A549 (cell line): ENCODE measurements at regions of chr6 and their contacts with region 1.

Region 1: DNA sequence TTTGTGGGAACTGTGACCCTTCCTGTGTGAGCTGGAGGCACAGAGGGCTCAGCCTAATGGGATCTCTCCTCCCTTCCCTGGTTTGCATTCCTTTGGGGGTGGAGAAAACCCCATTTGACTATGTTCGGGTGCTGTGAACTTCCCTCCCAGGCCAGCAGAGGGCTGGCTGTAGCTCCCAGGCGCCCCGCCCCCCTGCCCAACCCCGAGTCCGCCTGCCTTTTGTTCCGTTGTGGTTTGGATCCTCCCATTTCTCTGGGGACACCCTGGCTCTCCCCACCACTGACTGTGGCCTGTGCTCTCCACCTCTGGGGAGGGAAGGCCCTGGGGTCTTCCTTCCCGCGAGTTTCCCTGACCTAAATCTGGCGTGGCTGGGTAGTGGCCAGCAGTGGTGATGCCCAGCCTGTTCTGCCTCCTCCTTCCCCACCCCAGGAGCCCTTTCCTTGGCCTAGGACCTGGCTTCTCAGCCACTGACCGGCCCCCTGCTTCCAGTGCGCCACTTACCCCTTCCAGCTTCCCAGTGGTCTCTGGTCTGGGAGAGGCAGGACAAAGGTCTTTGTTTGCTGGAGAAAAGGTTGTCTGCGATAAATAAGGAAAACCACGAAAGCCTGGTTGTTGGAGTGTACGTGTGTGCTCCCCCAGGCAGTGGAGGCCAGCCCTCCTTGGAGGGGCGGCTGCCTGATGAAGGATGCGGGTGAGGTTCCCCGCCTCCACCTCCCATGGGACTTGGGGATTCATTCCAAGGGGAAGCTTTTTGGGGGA is 4.9 kb downstream of the VEGFA start:
- DNase-seq: peak; percentile 57 to 85
- ATAC-seq: peak in 1 of 2 experiments; percentile 45; a peak in 4 of 6 replicates
- H3K4me3 ChIP-seq: peak overlapping the region; percentile 59; the same call in 2 of the 3 replicates
- H3K27ac ChIP-seq: peak overlapping the region; percentile 97 to 100
- H3K4me1 ChIP-seq: peaks cover 30% of the 10 kb centered on the region
- CTCF ChIP-seq: peak; percentile 52
- EP300 ChIP-seq: no peak
- POLR2A ChIP-seq: no peak
- RAD21 ChIP-seq: peak; percentile 33 to 53; a peak in 4 of 5 replicates

Region 2: DNA sequence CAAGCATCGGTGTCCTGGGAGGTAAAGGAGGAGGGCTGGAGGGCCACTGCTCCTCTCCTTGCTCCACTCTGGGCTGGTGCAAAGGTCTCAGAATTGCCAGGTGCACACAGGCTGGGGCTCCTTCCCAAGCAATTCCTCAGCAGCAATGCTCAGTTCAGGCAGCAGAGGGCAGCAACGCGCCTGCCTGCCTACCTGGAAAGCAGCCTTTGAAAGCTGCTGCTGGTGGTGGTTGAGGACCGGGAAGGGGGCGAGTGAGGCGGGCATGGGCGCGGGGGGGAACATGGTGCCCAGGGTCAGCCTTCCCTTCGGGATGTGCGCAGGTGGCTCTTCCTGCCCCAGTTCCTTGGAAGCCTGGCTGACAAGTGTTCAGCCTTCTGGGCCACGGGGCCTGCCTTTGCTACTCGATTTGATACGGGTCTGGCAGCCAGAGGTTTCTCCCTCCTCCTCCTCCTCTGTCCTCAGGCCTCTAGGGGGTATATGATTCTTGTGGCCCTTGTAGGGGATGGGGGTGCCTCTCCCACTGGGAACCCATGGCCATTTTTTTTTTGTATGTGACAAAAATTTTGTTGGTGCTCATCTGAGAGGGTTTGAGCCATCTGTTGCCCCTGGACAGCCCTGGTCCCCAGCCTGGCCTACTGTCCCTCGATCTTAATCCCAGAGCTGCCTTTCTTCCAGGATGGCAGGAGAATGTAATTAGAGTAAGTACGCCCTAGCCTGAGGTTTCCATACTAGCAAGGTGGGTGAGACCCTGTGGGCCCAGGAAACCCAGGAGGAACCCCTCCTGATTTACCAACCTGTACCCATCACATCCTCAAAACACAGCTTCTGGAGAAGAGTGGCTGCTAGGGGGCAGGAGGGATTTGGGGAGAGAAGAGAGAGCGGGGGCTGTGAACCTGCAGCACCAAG is 107.5 kb before region 1 on chr6:
- CTCF ChIA-PET with region 1: interaction called, 72 read pairs
- POLR2A ChIA-PET with region 1: interaction called, 4 read pairs
- DNase-seq: peak; percentile 54 to 68
- ATAC-seq: peak; percentile 71 to 81
- H3K4me3 ChIP-seq: no peak overlapping the region
- H3K27ac ChIP-seq: peak overlapping the region; percentile 28 to 66; a peak in 2 of 6 replicates
- H3K4me1 ChIP-seq: peaks cover 14% of the 10 kb centered on the region; the same call in 2 of the 3 replicates
- CTCF ChIP-seq: peak; percentile 77
- EP300 ChIP-seq: no peak
- POLR2A ChIP-seq: no peak
- RAD21 ChIP-seq: peak; percentile 87 to 88

Region 3: DNA sequence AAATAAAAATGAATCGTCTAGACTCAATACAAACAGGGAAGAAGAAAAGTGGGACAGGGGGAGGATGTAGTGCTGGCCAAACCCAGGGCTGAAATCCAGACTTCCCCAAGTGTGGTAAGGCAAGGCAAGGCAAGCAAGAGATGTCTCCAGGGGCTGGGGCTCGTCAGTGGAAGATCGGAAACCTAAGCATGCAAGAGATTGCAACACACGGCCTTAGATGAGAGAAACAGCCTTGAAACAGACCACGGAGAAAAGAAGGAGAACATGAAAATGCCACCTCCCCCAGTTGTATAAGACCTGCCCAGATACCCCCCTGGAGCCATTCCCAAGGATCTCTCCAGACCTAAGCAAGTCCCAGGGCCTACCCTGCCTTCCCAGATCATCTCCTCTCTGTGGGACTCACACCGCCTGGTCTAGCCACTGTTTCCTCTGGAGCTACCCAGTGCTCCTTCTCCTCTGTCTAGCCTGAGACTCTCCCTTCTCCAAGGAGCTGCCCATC is 15.1 kb after region 1 on chr6:
- CTCF ChIA-PET with region 1: interaction called, 26 read pairs
- POLR2A ChIA-PET with region 1: no interaction called
- DNase-seq: no peak
- ATAC-seq: peak; percentile 20 to 45; a peak in 3 of 6 replicates
- H3K4me3 ChIP-seq: no peak overlapping the region
- H3K27ac ChIP-seq: peak overlapping the region in 1 of 2 experiments; percentile 33; a peak in 1 of 6 replicates
- H3K4me1 ChIP-seq: no peaks in the 10 kb centered on the region
- CTCF ChIP-seq: no peak
- EP300 ChIP-seq: no peak
- POLR2A ChIP-seq: no peak
- RAD21 ChIP-seq: no peak

Region 4: DNA sequence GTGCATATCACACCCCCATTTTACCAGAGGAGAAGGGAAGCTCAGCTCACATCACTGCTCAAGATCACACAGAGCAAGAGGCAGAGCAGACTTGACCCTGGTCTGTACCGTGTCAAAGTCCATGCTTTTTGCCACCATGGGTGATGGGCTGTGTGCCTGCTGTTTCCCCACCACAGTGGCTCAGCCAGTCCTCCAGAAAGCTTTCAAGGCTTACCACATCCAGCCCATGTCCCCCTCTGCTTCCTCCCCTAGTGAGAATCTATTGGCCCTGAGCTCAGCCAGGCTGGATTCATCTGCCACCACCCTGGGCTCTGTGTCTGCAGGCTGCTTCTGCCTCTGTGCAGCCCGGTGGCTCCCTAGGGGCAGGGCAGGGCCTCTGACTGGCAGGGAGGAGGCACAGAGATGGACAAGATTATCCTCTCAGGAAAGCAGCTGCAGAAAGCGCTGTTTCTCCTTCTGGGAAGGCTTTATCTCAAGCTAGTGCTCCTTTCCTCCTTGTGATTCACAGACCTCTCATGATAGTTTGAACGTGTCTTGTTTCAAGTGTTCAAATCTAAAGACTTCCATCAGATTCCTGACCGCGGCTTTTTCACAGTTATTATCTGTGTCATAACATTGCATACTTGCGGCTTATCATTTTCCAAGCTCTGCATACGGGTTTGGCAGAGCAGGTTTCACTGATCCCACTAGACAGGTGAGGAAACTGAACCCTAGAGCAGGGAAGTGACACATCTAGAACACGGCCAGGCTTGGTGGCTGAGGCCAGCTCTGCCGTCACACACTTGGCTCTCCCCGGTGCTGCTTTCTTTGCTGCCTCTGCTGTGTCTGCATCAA is 32.5 kb after region 1 on chr6:
- CTCF ChIA-PET with region 1: interaction called, 16 read pairs
- POLR2A ChIA-PET with region 1: no interaction called
- DNase-seq: no peak
- ATAC-seq: peak; percentile 9 to 57; a peak in 3 of 6 replicates
- H3K4me3 ChIP-seq: no peak overlapping the region
- H3K27ac ChIP-seq: peak overlapping the region; percentile 58 to 79; a peak in 4 of 6 replicates
- H3K4me1 ChIP-seq: peaks cover 66% of the 10 kb centered on the region
- CTCF ChIP-seq: no peak
- EP300 ChIP-seq: no peak
- POLR2A ChIP-seq: no peak
- RAD21 ChIP-seq: no peak

Region 5: DNA sequence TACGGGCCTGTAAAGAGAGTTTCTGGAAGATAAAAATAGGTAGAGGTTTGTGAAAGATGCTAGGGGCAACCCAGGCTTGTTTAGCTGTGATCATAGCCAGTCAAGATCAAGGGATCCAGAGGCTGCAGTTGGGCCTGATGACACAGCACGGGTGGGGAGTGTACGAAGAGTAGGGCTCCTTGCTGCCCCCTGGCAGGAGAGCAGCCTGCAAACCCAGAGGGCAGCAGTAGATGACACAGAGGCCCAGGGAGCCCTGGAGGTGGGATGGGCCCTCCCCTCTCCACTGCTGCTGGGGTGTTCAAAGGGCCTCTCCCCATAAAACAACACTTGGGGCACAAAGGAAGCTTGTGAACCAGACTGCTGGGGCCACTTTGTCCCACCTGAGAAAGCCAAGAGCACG is 42.2 kb after region 1 on chr6:
- CTCF ChIA-PET with region 1: interaction called, 24 read pairs
- POLR2A ChIA-PET with region 1: interaction called, 5 read pairs
- DNase-seq: peak; percentile 62 to 66
- ATAC-seq: peak; percentile 97 to 100
- H3K4me3 ChIP-seq: no peak overlapping the region
- H3K27ac ChIP-seq: peak overlapping the region; percentile 63 to 80
- H3K4me1 ChIP-seq: peaks cover 5% of the 10 kb centered on the region; the same call in 2 of the 3 replicates
- CTCF ChIP-seq: peak; percentile 38; the same call in 2 of the 3 replicates
- EP300 ChIP-seq: no peak
- POLR2A ChIP-seq: no peak
- RAD21 ChIP-seq: peak; percentile 32 to 38; a peak in 2 of 5 replicates

Region 6: GRCh38 chr6:44002593-44003344 is 227.8 kb after region 1 on chr6:
- CTCF ChIA-PET with region 1: interaction called, 19 read pairs
- POLR2A ChIA-PET with region 1: interaction called, 14 read pairs
- DNase-seq: peak; percentile 55 to 76
- ATAC-seq: peak; percentile 72
- H3K4me3 ChIP-seq: peak overlapping the region; percentile 60
- H3K27ac ChIP-seq: peak overlapping the region; percentile 100
- H3K4me1 ChIP-seq: peaks cover 68% of the 10 kb centered on the region
- CTCF ChIP-seq: no peak
- EP300 ChIP-seq: no peak
- POLR2A ChIP-seq: no peak; the same call in 1 of the 2 replicates
- RAD21 ChIP-seq: peak in 1 of 2 experiments; percentile 39; a peak in 3 of 5 replicates

Region 7: DNA sequence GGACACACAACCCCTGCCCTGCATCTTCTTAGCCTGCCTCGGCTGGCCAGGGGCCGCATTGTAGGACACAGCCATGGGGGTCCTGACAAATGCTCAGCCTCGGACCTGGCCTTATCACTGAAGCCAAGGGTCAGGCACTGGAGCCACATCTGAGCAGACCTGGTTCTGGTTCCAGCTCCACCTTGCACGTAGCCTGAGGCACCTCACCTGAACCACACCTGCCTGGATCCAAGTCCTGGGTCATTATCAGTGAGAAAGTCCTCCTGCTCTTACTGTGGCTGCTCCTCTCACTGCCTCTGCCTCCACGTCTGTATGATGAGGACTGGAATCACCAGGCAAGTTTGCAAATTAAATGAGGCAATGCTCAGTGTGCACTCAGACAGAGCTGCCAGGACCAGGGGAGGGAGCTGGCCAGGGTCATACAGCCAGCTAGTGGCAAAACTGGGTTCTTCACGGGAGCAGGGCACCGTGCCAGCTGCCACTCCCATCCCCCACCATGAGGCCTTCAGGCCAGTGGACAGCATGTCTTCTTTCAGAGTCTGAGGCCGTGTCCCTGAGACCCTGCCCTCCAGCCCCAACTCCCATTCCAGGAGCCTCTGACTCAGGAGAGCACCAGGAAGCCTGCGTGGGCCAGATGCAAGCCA is 312.1 kb after region 1 on chr6:
- CTCF ChIA-PET with region 1: interaction called, 235 read pairs
- POLR2A ChIA-PET with region 1: interaction called, 5 read pairs
- DNase-seq: no peak
- ATAC-seq: peak in 1 of 2 experiments; percentile 36; a peak in 4 of 6 replicates
- H3K4me3 ChIP-seq: no peak overlapping the region
- H3K27ac ChIP-seq: no peak overlapping the region
- H3K4me1 ChIP-seq: no peaks in the 10 kb centered on the region
- CTCF ChIP-seq: no peak
- EP300 ChIP-seq: no peak
- POLR2A ChIP-seq: no peak
- RAD21 ChIP-seq: no peak